Endothelial cell of umbilical vein (primary cell): ENCODE measurements at regions of chr17 and their contacts with region 1.

Region 1: GRCh38 chr17:75109407-75110233 is at the start of gene ARMC7:
- DNase-seq: peak; percentile 81
- H3K4me3 ChIP-seq: peak within 1 kb of the TSS; percentile 71 to 74 (median 73)
- H3K27ac ChIP-seq: no peak within 1 kb of the TSS
- H3K4me1 ChIP-seq: peaks cover 24% of the 10 kb centered on the region
- H3K27me3 ChIP-seq: no peaks in the 10 kb centered on the region
- CTCF ChIP-seq: no peak
- POLR2A ChIP-seq: peak; percentile 92
- total RNA-seq, gene ARMC7: 14.5 and 15.7 TPM in 2 replicates

Region 2: GRCh38 chr17:75046582-75047289 is 62.9 kb before region 1 on chr17 and contains the starts of genes ATP5PD and KCTD2:
- CTCF ChIA-PET with region 1: interaction called, 8 read pairs
- POLR2A ChIA-PET with region 1: no interaction called
- dilution Hi-C with region 1: no loop called
- intact Hi-C with region 1: loop called (anchors 5 kb)
- DNase-seq: peak; percentile 98
- H3K4me3 ChIP-seq: peak within 1 kb of the TSS; percentile 58 to 93 (median 67)
- H3K27ac ChIP-seq: peak within 1 kb of the TSS; percentile 19
- H3K4me1 ChIP-seq: peaks cover 13% of the 10 kb centered on the region
- H3K27me3 ChIP-seq: no peaks in the 10 kb centered on the region
- CTCF ChIP-seq: no peak
- POLR2A ChIP-seq: peak; percentile 93
- total RNA-seq, gene ATP5PD: 200 and 202 TPM in 2 replicates
- total RNA-seq, gene KCTD2: 20.6 and 23.2 TPM in 2 replicates

Region 3: GRCh38 chr17:75077496-75078283 is 31.9 kb before region 1 on chr17:
- CTCF ChIA-PET with region 1: interaction called, 19 read pairs
- POLR2A ChIA-PET with region 1: interaction called, 3 read pairs
- dilution Hi-C with region 1: no loop called
- intact Hi-C with region 1: loop called (anchors 2 kb)
- DNase-seq: peak; percentile 58
- H3K4me3 ChIP-seq: peak overlapping the region in 1 of 3 experiments; percentile 34
- H3K27ac ChIP-seq: peak overlapping the region; percentile 51
- H3K4me1 ChIP-seq: peaks cover 16% of the 10 kb centered on the region
- H3K27me3 ChIP-seq: no peaks in the 10 kb centered on the region
- CTCF ChIP-seq: peak in 1 of 2 donors; percentile 36
- POLR2A ChIP-seq: no peak

Region 4: GRCh38 chr17:75124041-75124818 is 14.6 kb after region 1 on chr17:
- CTCF ChIA-PET with region 1: interaction called, 138 read pairs
- POLR2A ChIA-PET with region 1: interaction called, 7 read pairs
- dilution Hi-C with region 1: no loop called
- intact Hi-C with region 1: loop called (anchors 1 kb)
- DNase-seq: peak; percentile 87
- H3K4me3 ChIP-seq: no peak overlapping the region
- H3K27ac ChIP-seq: peak overlapping the region; percentile 85
- H3K4me1 ChIP-seq: peaks cover 17% of the 10 kb centered on the region
- H3K27me3 ChIP-seq: no peaks in the 10 kb centered on the region
- CTCF ChIP-seq: no peak
- POLR2A ChIP-seq: peak; percentile 66

Region 5: GRCh38 chr17:75173526-75173925 is 63.9 kb after region 1 on chr17:
- CTCF ChIA-PET with region 1: interaction called, 171 read pairs
- POLR2A ChIA-PET with region 1: interaction called, 12 read pairs
- dilution Hi-C with region 1: no loop called
- intact Hi-C with region 1: loop called (anchors 1 kb)
- DNase-seq: no peak
- H3K4me3 ChIP-seq: no peak overlapping the region
- H3K27ac ChIP-seq: no peak overlapping the region
- H3K4me1 ChIP-seq: no peaks in the 10 kb centered on the region
- H3K27me3 ChIP-seq: no peaks in the 10 kb centered on the region
- CTCF ChIP-seq: no peak
- POLR2A ChIP-seq: no peak

Region 6: DNA sequence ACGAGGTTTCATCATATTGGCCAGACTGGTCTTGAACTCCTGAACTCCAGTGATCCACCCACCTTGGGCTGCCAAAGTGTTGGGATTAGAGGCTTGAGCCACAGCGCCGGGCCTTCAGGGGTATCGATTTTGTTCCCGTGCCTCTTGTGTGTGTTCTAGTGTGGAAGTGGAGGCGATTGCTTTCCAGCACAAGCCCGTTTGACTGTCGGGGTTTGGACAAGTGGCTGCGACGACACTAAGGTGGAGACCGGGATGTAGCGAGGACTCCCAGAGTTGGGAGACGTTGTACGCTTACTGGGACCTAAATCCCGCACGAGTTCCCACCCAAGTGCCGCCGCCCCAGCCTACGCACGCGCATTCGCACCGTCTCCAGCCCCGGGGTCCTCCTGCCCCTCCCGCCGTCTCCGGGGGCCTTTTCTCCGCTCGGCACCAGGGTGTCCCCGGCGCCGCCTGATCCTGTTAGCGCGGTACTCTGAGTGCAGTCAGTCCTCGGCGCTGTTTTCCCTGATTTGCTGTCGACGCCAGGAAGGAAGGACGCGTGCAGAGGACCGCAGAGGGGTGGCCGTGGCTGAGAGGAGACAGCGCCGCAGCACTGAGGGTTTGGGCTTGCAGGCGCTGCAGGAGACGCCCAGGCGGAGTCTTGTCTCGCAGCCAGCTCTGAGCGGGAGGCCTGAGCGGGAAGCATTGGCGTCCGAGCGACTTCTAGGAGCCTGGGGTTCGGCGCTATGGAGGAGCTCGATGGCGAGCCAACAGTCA is 95.6 kb after region 1 on chr17 and contains the start of gene NUP85:
- CTCF ChIA-PET with region 1: interaction called, 257 read pairs
- POLR2A ChIA-PET with region 1: interaction called, 5 read pairs
- dilution Hi-C with region 1: no loop called
- intact Hi-C with region 1: loop called (anchors 1 kb)
- DNase-seq: peak; percentile 96
- H3K4me3 ChIP-seq: peak within 1 kb of the TSS; percentile 58 to 91 (median 85)
- H3K27ac ChIP-seq: peak within 1 kb of the TSS; percentile 90
- H3K4me1 ChIP-seq: peaks cover 2% of the 10 kb centered on the region
- H3K27me3 ChIP-seq: no peaks in the 10 kb centered on the region
- CTCF ChIP-seq: no peak
- POLR2A ChIP-seq: peak; percentile 88
- total RNA-seq, gene NUP85: 98.3 and 105 TPM in 2 replicates

Region 7: GRCh38 chr17:75412455-75413317 is 303.1 kb after region 1 on chr17:
- CTCF ChIA-PET with region 1: interaction called, 5 read pairs
- POLR2A ChIA-PET with region 1: no interaction called
- dilution Hi-C with region 1: no loop called
- intact Hi-C with region 1: loop called (anchors 1 kb)
- DNase-seq: peak; percentile 74
- H3K4me3 ChIP-seq: peak overlapping the region in 1 of 3 experiments; percentile 27
- H3K27ac ChIP-seq: no peak overlapping the region
- H3K4me1 ChIP-seq: peaks cover 5% of the 10 kb centered on the region
- H3K27me3 ChIP-seq: peaks cover 2 to 3% of the 10 kb centered on the region in 2 experiments
- CTCF ChIP-seq: peak; percentile 72 to 77
- POLR2A ChIP-seq: no peak